SK-N-SH (cell line): ENCODE measurements at regions of chr5 and their contacts with region 1.

Region 1: DNA sequence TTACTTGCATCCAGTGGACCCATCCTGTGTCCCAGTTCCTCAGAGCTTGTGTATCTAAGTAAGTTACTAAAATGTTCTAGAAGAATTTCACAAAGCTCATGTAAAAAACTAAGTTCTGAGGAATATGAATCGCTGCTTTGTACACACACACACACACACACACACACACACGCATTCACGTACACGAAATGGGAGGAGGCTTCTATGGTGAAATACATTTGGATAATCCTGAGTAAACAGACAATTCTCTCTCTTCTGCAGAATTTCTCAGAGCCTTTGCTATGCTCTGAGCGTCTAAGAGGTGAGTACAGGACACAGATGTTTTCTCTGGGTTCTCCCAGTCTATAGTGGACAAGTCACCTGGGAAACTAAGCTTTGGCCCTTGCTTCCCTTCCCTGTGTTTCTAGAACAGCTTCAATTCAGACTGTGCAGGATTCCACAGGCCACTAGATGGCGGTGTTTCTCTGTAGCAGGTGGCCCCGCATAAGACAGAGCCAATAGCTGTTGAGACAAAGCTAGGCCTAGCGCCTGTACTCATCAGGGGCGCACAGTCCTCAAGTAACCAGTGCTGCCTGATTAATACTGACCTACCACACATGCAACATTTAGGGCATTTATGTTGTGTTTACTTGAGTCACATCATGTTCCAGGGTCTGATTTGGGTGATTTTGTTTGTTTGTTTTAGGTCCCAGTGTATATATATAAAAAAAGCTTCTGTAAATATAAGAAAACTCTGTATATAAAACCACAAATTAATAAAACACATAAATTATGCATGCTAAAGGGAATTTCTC is 114.8 kb downstream of the LIFR start:
- DNase-seq: peak; percentile 86
- H3K4me3 ChIP-seq: no peak overlapping the region; a peak in 1 of 4 replicates
- H3K27ac ChIP-seq: no peak overlapping the region
- H3K4me1 ChIP-seq: no peaks in the 10 kb centered on the region
- H3K27me3 ChIP-seq: no peaks in the 10 kb centered on the region
- CTCF ChIP-seq: peak; percentile 97
- EP300 ChIP-seq: no peak
- RAD21 ChIP-seq: peak; percentile 99

Region 2: DNA sequence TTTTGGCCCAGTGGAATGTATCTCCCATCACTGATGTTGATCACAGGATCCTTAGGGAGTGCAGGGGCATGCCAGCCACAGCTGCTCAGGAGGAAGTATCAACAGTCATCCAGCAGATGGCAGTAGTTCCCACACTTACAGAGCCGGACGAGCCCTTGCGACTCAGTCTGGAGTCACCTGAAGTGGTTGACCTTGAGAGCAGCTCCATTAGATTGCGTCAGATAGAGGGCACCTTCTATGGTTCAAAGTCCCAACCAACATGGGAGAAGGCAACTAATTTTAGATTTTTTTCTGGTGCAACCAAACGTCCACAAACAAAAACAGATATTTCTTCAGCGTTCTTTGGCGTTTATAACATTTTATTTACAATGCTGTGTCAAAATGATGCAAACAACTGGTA is 58.8 kb before region 1 on chr5:
- CTCF ChIA-PET with region 1: interaction called, 20 read pairs
- POLR2A ChIA-PET with region 1: no interaction called
- DNase-seq: peak; percentile 67
- H3K4me3 ChIP-seq: no peak overlapping the region; a peak in 1 of 4 replicates
- H3K27ac ChIP-seq: no peak overlapping the region
- H3K4me1 ChIP-seq: peaks cover 0 to 4% of the 10 kb centered on the region in 2 experiments; a peak in 2 of 4 replicates
- H3K27me3 ChIP-seq: peaks cover 10% of the 10 kb centered on the region; the same call in 1 of the 2 replicates
- CTCF ChIP-seq: peak; percentile 81
- EP300 ChIP-seq: no peak
- RAD21 ChIP-seq: peak; percentile 74

Region 3: GRCh38 chr5:38453506-38453905 is 11.9 kb after region 1 on chr5:
- CTCF ChIA-PET with region 1: interaction called, 58 read pairs
- POLR2A ChIA-PET with region 1: no interaction called
- DNase-seq: no peak
- H3K4me3 ChIP-seq: no peak overlapping the region
- H3K27ac ChIP-seq: no peak overlapping the region
- H3K4me1 ChIP-seq: peaks cover 0 to 10% of the 10 kb centered on the region in 2 experiments; a peak in 2 of 4 replicates
- H3K27me3 ChIP-seq: no peaks in the 10 kb centered on the region
- CTCF ChIP-seq: no peak
- EP300 ChIP-seq: no peak
- RAD21 ChIP-seq: no peak

Region 4: GRCh38 chr5:38532165-38532669 is 90.6 kb after region 1 on chr5:
- CTCF ChIA-PET with region 1: interaction called, 13 read pairs
- POLR2A ChIA-PET with region 1: no interaction called
- DNase-seq: no peak
- H3K4me3 ChIP-seq: no peak overlapping the region; a peak in 1 of 4 replicates
- H3K27ac ChIP-seq: no peak overlapping the region
- H3K4me1 ChIP-seq: peaks cover 0 to 2% of the 10 kb centered on the region in 2 experiments; a peak in 2 of 4 replicates
- H3K27me3 ChIP-seq: no peaks in the 10 kb centered on the region
- CTCF ChIP-seq: no peak
- EP300 ChIP-seq: no peak
- RAD21 ChIP-seq: no peak

Region 5: GRCh38 chr5:38751103-38751502 is 309.5 kb after region 1 on chr5:
- CTCF ChIA-PET with region 1: interaction called, 17 read pairs
- POLR2A ChIA-PET with region 1: no interaction called
- DNase-seq: no peak
- H3K4me3 ChIP-seq: no peak overlapping the region; a peak in 1 of 4 replicates
- H3K27ac ChIP-seq: no peak overlapping the region
- H3K4me1 ChIP-seq: peaks cover 5 to 6% of the 10 kb centered on the region in 2 experiments; a peak in 3 of 4 replicates
- H3K27me3 ChIP-seq: no peaks in the 10 kb centered on the region
- CTCF ChIP-seq: no peak; the same call in 1 of the 2 replicates
- EP300 ChIP-seq: no peak
- RAD21 ChIP-seq: peak; percentile 54

Region 6: GRCh38 chr5:38816083-38817030 is 374.7 kb after region 1 on chr5:
- CTCF ChIA-PET with region 1: interaction called, 338 read pairs
- POLR2A ChIA-PET with region 1: no interaction called
- DNase-seq: peak; percentile 58
- H3K4me3 ChIP-seq: no peak overlapping the region
- H3K27ac ChIP-seq: peak overlapping the region in 1 of 2 experiments; percentile 55; a peak in 1 of 4 replicates
- H3K4me1 ChIP-seq: peaks cover 0 to 4% of the 10 kb centered on the region in 2 experiments; a peak in 2 of 4 replicates
- H3K27me3 ChIP-seq: no peaks in the 10 kb centered on the region
- CTCF ChIP-seq: no peak
- EP300 ChIP-seq: peak in 1 of 2 experiments; percentile 56; a peak in 2 of 4 replicates
- RAD21 ChIP-seq: no peak